Activated CD4-positive, alpha-beta T cell treated with anti-CD3 and anti-CD28 coated beads, Interleukin-2, amount 10 ng/mL, durations not matched to agents 24 days and 14 days (primary cell): ENCODE measurements at regions of chr5 and their contacts with region 1.

Region 1: GRCh38 chr5:119470851-119471451 is 18.7 kb downstream of the HSD17B4 start:
- DNase-seq: peak; percentile 73
- H3K4me3 Mint-ChIP-seq: no peak overlapping the region
- H3K27ac Mint-ChIP-seq: no peak overlapping the region
- H3K4me1 Mint-ChIP-seq: peaks cover 5% of the 10 kb centered on the region
- H3K27me3 Mint-ChIP-seq: no peaks in the 10 kb centered on the region

Region 2: DNA sequence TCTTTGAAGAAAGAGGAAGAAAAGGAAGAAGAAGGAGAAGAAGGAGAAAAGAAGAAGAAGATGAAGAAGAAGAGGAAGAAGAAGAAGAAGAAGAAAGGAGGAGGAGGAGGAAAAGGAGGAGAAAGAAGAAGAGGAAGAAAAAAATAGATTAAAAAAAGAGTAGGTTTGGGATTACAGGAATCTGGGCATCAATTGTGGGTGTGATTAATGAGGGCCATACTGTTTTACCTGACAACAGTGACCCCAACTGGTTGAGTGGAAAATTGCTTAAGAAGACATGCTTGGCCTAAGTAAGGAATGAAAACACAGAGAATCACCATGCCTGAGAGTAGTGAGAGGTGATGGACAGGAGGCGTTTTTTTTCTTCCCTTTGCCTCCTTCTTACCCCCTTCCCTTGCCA is 273.0 kb after region 1 on chr5:
- intact Hi-C with region 1: loop called (anchors 5 kb)
- DNase-seq: peak; percentile 68
- H3K4me3 Mint-ChIP-seq: no peak overlapping the region
- H3K27ac Mint-ChIP-seq: no peak overlapping the region
- H3K4me1 Mint-ChIP-seq: no peaks in the 10 kb centered on the region
- H3K27me3 Mint-ChIP-seq: no peaks in the 10 kb centered on the region

Region 3: DNA sequence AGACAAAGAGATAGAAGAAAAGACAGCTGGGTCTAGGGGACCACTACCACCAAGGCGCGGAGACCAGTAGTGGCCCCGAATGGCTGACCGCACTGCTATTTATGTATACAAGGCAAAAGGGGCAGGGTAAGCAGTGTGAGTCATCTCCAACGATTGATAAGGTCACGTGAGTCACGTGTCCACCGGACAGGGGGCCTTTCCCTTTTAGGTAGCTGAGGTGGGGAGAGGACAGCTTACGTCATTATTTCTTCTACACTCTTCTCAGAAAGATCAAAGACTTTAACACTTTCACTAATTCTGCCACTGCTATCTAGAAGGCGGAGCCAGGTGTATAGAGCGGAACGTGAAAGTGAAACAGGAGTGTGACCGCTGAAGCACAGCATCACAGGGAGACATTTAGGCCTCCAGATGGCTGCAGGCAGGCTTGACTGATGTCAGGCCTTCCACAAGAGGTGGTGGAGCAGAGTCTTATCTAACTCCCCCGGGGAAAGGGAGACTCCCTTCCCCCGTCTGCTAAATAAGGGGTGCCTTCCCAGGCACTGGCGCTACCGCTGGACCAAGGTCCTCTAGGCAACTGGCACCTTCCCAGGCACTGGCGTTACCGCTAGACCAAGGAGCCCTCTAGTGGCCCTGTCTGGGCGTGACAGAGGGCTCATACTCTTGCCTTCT is 987.0 kb after region 1 on chr5:
- intact Hi-C with region 1: loop called (anchors 5 kb)
- DNase-seq: peak; percentile 86
- H3K4me3 Mint-ChIP-seq: peak overlapping the region; percentile 62
- H3K27ac Mint-ChIP-seq: no peak overlapping the region
- H3K4me1 Mint-ChIP-seq: peaks cover 3% of the 10 kb centered on the region
- H3K27me3 Mint-ChIP-seq: peaks cover 20% of the 10 kb centered on the region